ENCODE measurements at regions of chrX and their contacts with region 1.

Region 1: GRCh38 chrX:19887911-19888879 is 795 bp upstream of the SH3KBP1 start:
- DNase-seq: peak; percentile 51
- H3K4me3 ChIP-seq: peak overlapping the region; percentile 45
- H3K27ac ChIP-seq: peak overlapping the region; percentile 41
- H3K4me1 ChIP-seq: no peaks in the 10 kb centered on the region
- H3K27me3 ChIP-seq: no peaks in the 10 kb centered on the region
- CTCF ChIP-seq: peak; percentile 31

Region 2: GRCh38 chrX:19368576-19368975 is 519.6 kb before region 1 on chrX:
- intact Hi-C with region 1: no loop called
- DNase-seq: no peak
- H3K4me3 ChIP-seq: no peak overlapping the region
- H3K27ac ChIP-seq: no peak overlapping the region
- H3K4me1 ChIP-seq: no peaks in the 10 kb centered on the region
- H3K27me3 ChIP-seq: no peaks in the 10 kb centered on the region
- CTCF ChIP-seq: no peak

Region 3: GRCh38 chrX:19544693-19545305 is 343.4 kb before region 1 on chrX:
- intact Hi-C with region 1: loop called (anchors 5 kb)
- DNase-seq: peak; percentile 59
- H3K4me3 ChIP-seq: no peak overlapping the region
- H3K27ac ChIP-seq: no peak overlapping the region
- H3K4me1 ChIP-seq: no peaks in the 10 kb centered on the region
- H3K27me3 ChIP-seq: no peaks in the 10 kb centered on the region
- CTCF ChIP-seq: peak; percentile 72

Region 4: GRCh38 chrX:19595043-19595677 is 293.0 kb before region 1 on chrX:
- intact Hi-C with region 1: loop called (anchors 5 kb)
- DNase-seq: no peak
- H3K4me3 ChIP-seq: no peak overlapping the region
- H3K27ac ChIP-seq: no peak overlapping the region
- H3K4me1 ChIP-seq: no peaks in the 10 kb centered on the region
- H3K27me3 ChIP-seq: no peaks in the 10 kb centered on the region
- CTCF ChIP-seq: no peak

Region 5: GRCh38 chrX:19739683-19740082 is 148.5 kb before region 1 on chrX:
- intact Hi-C with region 1: loop called (anchors 5 kb)
- DNase-seq: peak; percentile 70
- H3K4me3 ChIP-seq: no peak overlapping the region
- H3K27ac ChIP-seq: no peak overlapping the region
- H3K4me1 ChIP-seq: no peaks in the 10 kb centered on the region
- H3K27me3 ChIP-seq: no peaks in the 10 kb centered on the region
- CTCF ChIP-seq: peak; percentile 53